Thyroid gland (tissue), 4 donors: ENCODE measurements at regions of chr20 and their contacts with region 1.

Region 1: DNA sequence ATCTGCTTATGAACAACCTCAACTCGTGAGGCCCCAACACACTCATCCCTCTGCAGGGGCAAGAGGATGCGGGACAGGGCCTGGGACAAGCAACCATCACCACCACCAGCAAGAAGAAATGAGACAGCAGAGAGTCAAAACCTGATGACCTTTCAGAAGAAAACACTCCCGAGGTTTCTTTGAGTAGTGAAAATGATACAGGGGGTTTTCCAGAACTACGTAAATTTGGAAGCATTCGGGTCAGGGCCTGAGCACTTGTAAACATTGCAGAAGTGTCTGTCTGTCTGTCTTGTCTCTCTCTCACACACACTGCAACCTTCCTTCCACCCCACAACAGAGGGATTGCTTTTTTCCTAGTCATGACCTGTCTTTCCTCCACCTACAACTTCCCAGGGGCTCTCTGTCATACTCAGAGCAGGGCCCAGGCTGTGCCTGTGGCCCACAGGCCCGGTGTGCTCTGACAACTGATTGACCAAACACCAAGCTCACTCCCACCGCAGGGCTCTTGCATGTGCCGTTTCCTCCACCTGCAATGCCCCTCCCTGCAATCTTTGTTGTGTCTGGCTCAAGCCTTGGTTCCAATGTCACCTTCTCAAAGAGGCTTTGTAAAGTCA is 90.9 kb downstream of the BMP7 start:
- DNase-seq: no peak
- H3K4me3 ChIP-seq: no peak overlapping the region
- H3K27ac ChIP-seq: no peak overlapping the region
- H3K4me1 ChIP-seq: no peaks in the 10 kb centered on the region
- H3K27me3 ChIP-seq: no peaks in the 10 kb centered on the region
- CTCF ChIP-seq: no peak
- POLR2A ChIP-seq: no peak

Region 2: DNA sequence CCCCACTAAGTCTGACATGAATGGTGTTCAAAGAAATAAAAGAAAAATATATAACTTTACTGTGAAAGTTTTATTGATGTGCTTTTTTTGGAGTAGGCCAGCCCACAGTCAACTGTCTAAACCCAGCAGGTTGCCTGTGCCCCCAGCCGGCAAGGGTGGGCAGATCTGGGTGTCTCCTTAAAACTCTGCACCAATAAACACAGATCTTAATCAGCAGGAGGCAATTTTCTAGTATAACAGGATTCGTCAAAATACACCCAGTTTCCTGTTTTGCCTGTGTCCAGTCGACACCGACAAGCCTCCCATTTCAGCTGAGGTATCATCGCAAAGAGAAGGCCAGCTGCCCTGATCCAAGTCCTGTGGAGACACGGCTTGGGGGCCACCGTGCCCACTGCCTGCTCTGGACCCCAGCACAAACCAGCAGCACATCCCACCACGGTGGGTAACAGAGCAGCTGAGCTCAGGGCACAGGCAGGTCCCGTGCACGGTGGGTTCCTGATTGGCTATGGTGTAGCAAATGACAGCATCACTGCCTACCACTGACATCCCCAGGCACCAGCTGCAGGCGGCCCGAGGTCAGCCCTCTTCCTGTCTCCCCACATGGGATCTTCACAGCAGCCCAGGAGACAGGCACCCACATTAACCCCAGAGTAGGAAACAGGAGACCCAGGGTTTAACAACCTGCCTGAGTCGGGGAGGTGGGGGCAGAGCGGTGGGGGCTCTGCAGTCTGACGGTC is 75.3 kb after region 1 on chr20:
- intact Hi-C with region 1: loop called (anchors 10 kb)
- DNase-seq: no peak
- H3K4me3 ChIP-seq: no peak overlapping the region
- H3K27ac ChIP-seq: peak overlapping the region; percentile 45 to 97 (median 94)
- H3K4me1 ChIP-seq: peaks cover 50 to 73% of the 10 kb centered on the region in 2 donors
- H3K27me3 ChIP-seq: no peaks in the 10 kb centered on the region
- CTCF ChIP-seq: no peak
- POLR2A ChIP-seq: no peak